K562 (cell line): ENCODE measurements at regions of chr10 and their contacts with region 1.

Region 1: GRCh38 chr10:72260588-72261322 is 13.0 kb upstream of the DDIT4 start:
- DNase-seq: peak; percentile 95 to 100 (median 100)
- ATAC-seq: peak; percentile 91
- H3K4me3 ChIP-seq: peak overlapping the region; percentile 54
- H3K27ac ChIP-seq: peak overlapping the region; percentile 94
- H3K4me1 ChIP-seq: peaks cover 43 to 54% of the 10 kb centered on the region in 2 experiments
- H3K27me3 ChIP-seq: no peaks in the 10 kb centered on the region
- CTCF ChIP-seq: peak in 2 of 3 experiments; percentile 30 to 33; a peak in 1 of 6 replicates
- EP300 ChIP-seq: peak; percentile 53; the same call in 1 of the 2 replicates
- POLR2A ChIP-seq: peak; percentile 73
- RAD21 ChIP-seq: no peak; a peak in 1 of 4 replicates

Region 2: DNA sequence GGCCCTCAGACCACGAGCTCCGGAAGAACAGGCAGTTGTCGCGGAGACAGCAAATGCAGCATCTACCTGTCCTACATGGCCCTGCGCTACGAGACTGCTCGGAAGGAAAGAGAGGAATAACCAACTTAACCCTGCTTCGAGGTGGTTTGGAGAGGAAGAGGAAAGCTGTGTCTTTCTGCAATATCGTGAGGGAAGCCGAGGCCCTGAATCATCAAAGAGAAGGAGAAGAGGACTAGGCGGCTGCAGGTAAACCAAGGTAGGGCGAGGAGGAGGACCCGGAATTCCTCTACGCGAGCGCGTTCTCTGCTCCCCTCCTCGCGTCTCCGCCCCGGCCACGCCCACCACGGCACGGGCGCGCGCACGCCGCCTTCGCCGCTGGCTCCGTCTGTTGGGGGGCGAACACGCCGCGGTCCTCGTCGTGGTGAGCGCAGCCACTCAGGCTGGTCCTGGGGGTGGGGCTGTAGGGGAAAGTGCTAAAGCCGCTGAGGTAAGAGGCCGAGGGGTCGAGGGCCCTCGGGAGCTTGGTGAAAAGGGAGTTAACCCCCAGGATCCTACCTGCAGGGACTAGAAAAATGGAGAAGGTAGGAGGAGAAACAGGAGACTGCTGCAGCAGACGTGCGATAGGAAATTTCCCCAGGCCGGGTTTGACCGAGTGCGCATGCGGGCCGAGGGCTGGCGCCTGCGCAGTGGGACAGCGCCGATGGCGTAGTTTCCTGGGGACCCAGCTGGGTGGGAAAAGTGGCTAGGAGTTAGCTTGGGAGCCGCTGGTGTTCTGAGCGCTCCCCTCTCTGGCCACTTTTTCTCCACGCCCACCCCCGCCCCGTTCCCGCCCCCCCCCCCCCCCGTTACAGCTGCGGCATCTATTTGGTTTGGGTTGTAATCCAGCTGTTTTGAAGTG is 44.9 kb before region 1 on chr10 and contains the starts of genes ANAPC16 and ASCC1:
- CTCF ChIA-PET with region 1: no interaction called
- POLR2A ChIA-PET with region 1: interaction called, 10 read pairs
- in situ Hi-C with region 1: no loop called
- intact Hi-C with region 1: no loop called
- DNase-seq: peak; percentile 93 to 98 (median 97)
- ATAC-seq: peak; percentile 90
- H3K4me3 ChIP-seq: peak within 1 kb of the TSS; percentile 65
- H3K27ac ChIP-seq: peak within 1 kb of the TSS; percentile 99
- H3K4me1 ChIP-seq: peaks cover 13 to 19% of the 10 kb centered on the region in 2 experiments; a peak in 4 of 5 replicates
- H3K27me3 ChIP-seq: no peaks in the 10 kb centered on the region
- CTCF ChIP-seq: 0 out of 6 replicates have a peak, but pooled peaks of 1 of the 3 experiments have one; percentile 1
- EP300 ChIP-seq: peak; percentile 22; the same call in 1 of the 2 replicates
- POLR2A ChIP-seq: peak; percentile 100
- RAD21 ChIP-seq: peak; percentile 10 to 34; a peak in 1 of 4 replicates
- polyA plus RNA-seq, gene ANAPC16: 184 to 208 TPM
- polyA plus RNA-seq, gene ASCC1: 50.8 to 73.3 TPM

Region 3: DNA sequence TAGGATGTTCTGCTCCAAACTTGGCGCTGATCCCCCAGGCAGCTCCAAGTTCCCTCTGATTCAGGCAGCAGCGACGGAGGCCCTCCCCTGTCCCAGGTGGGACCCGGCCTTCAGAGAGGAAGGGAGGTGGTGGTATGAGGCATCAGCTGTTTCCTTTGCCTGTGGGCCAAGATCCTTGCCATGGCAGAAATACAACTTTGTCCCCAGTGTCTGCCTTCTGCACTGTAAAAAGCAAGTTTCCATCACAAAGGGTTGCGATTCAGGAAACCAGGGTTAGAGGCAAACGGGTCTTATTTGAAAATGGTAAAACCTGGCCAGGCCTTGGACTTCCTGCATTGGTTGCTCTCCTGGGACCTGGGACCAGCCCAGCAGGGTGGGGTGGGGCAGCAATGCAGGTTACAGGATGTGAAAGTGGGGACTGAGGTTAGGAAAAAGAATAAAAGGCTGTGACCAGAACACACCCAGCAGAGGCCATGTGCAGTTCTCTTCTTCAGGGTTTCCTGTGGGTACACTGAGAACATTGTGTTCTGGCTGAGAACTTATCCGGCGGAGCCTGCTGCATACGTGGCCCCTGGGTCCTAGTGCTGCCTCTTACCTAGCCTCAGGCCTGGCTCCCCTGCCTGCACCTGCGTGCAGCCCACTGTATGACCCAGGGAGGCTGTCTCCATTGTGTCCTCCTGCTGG is 12.1 kb before region 1 on chr10:
- CTCF ChIA-PET with region 1: no interaction called
- POLR2A ChIA-PET with region 1: interaction called, 42 read pairs
- in situ Hi-C with region 1: no loop called
- intact Hi-C with region 1: loop called (anchors 2 kb)
- DNase-seq: no peak
- ATAC-seq: peak; percentile 51
- H3K4me3 ChIP-seq: no peak overlapping the region
- H3K27ac ChIP-seq: no peak overlapping the region
- H3K4me1 ChIP-seq: peaks cover 34 to 50% of the 10 kb centered on the region in 2 experiments
- H3K27me3 ChIP-seq: no peaks in the 10 kb centered on the region
- CTCF ChIP-seq: no peak
- EP300 ChIP-seq: no peak
- POLR2A ChIP-seq: no peak
- RAD21 ChIP-seq: no peak